Posterior cingulate gyrus (tissue), 11 donors: ENCODE measurements at regions of chr3 and their contacts with region 1.

Region 1: GRCh38 chr3:184582646-184583577 is 21.3 kb downstream of the EPHB3 start:
- DNase-seq: peak in 7 of 10 donors; percentile 49 to 90 (median 60)

Region 2: DNA sequence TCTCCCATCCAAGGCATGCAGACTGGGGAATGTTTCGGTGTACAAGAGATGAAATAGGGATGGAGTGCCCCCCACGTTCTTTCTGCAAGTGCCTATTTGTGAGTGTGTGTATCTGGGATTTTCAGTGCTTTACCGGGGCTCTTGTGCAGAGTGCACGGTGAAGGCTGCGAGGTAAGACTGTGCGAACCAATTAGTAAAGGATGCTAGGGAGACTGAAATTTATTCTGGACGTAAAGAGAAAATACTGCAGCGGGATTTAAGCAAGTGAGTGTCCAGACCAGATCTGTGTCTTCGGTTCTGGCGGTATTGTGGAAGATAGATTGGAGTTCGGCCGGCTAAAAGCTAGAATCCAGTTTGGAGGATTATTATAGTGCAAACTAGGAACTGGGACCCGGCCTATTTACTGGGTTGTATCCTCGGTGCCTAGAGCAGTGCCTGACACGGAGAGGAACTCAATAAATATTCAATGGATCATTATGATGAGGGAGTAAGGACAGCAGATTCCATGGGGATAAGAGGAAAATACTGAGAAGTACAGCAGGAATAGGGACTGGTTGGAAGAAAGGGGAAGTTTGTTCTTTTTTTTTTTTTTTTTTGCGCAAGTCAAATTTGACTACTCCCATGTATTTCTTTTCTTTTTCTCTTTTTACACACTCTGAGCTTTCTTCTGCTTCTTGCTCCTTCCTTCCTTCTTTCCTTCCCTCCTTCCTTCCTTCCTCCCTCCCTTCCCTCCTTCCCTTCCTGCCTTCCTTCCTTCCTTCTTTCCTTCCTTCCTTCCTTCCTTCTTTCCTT is 129.5 kb after region 1 on chr3:
- intact Hi-C with region 1: loop called (anchors 1 kb)
- DNase-seq: no peak

Region 3: DNA sequence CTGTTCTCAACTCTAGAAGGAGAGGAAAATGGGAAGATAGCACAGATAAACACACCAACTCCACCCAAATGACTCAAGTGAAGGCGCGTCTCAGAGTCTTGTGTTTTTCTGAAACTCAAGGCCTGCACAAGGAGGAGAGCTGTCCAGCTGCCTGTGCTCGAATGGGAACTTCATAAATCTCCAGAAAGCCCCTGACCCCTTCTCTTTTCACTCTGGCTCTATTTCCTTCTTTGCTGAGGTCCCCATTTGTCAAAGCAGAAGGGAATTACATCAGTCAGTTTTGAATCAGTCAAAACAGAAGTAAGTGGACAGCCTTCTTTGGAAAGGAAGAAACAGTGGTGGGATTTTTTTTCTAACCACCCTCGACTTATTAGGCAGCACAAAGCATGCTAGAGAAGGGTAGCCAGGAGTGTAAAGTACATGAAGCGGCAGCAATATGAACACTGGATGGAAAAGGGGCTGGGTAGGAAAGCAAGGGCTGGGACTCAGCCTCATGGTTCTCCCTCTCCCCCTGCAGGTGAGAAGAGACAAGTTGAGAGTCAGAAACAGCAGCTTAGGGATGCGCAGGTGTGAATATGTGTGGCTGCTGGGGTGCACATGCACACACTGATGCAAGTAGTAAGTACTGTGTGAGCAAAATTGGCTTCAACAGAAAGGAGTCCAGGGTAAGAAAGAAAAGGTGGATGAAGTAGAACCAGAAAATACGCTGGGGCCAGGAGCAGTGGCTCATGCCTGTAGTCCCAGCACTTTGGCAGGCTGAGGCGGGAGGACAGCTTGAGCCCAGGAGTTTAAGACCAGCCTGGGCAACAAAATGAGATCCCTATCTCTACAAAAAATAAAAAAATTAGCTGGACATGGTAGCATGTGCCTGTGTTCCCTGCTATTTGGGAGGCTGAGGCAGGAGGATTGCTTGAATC is 165.6 kb after region 1 on chr3:
- intact Hi-C with region 1: no loop called
- DNase-seq: no peak

Region 4: DNA sequence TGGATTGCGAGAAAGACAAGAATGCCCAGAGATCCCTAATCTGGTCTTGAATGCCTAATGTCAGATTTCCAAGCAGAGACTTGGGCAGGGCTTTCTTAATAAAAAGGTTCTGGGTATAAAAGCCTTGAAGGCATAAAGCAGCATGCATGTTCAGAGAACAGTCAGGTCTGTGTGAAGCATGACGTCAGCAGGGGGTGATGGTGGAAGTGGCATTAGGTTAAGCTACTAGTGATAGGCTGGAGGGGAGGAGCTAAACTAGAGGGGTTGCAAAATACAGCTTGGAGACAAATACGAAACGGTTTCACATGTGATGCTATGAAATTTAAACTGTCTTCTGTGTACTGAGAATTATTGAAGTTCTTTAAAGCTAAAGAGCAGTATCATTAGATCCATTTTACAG is 354.7 kb after region 1 on chr3:
- intact Hi-C with region 1: no loop called
- DNase-seq: no peak